ENCODE measurements at regions of chr6 and their contacts with region 1.

Region 1: DNA sequence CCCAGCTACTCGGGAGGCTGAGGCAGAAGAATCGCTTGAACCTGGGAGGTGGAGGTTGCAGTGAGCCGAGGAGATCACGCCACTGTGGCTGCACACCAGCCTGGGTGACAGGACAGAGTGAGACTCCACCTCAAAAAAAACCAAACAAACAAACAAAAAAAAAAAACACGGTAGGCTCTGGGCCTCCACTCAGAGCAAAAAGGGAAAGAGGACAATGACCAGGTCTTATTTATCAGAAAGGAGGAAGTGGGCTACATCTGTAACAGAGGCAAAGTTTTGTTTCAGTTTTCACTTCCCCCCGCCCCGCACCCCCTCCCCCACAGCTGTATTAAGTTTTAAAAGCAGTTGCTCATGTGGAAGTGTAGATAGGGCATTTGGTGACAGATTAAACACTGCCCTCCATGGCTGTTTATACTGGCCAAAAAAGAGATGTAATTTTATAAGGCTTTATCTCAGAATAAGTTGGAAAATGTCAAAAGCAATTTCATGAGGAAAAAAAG is 114.6 kb downstream of the RCAN2 start:
- DNase-seq: no peak
- ATAC-seq: peak in 2 of 4 donors; percentile 7 to 22
- H3K4me3 ChIP-seq: no peak overlapping the region
- H3K27ac ChIP-seq: peak overlapping the region in 1 of 12 donors; percentile 44
- H3K4me1 ChIP-seq: peaks cover 0 to 73% (median 45%) of the 10 kb centered on the region in 12 donors
- H3K27me3 ChIP-seq: no peaks in the 10 kb centered on the region
- CTCF ChIP-seq: no peak
- POLR2A ChIP-seq: no peak

Region 2: GRCh38 chr6:46221222-46221793 is 155.3 kb before region 1 on chr6:
- intact Hi-C with region 1: no loop called
- DNase-seq: no peak
- ATAC-seq: peak in 3 of 4 donors; percentile 35 to 67 (median 55)
- H3K4me3 ChIP-seq: no peak overlapping the region
- H3K27ac ChIP-seq: no peak overlapping the region
- H3K4me1 ChIP-seq: peaks cover 0 to 35% (median 7%) of the 10 kb centered on the region in 12 donors
- H3K27me3 ChIP-seq: no peaks in the 10 kb centered on the region
- CTCF ChIP-seq: peak; percentile 72 to 90 (median 84)
- POLR2A ChIP-seq: no peak

Region 3: DNA sequence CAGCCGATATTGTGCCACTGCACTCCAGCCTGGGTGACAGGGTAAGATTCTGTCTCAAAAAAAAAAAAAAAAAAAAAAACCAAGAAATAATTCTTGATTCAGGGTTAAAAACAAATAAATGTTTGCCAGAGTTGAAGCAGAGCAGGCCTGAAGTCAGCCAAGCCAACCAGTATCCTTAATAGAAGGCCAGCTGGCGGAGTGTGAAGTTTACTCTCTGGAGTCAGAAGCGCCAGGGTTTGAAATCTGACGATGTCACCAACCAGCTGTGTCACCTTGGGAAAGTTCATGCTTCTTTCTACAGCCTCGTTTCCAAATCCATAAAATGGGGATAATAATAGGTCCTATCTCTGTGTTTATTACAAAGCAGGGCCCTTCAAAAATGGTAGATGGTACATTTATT is 132.9 kb before region 1 on chr6:
- intact Hi-C with region 1: loop called in 1 of 10 experiments (anchors 10 kb)
- DNase-seq: peak in 2 of 5 donors; percentile 35 to 39
- ATAC-seq: peak; percentile 51 to 72 (median 62)
- H3K4me3 ChIP-seq: no peak overlapping the region
- H3K27ac ChIP-seq: peak overlapping the region in 7 of 12 donors; percentile 24 to 69 (median 53)
- H3K4me1 ChIP-seq: peaks cover 2 to 70% (median 25%) of the 10 kb centered on the region in 12 donors
- H3K27me3 ChIP-seq: no peaks in the 10 kb centered on the region
- CTCF ChIP-seq: no peak
- POLR2A ChIP-seq: no peak

Region 4: GRCh38 chr6:46312654-46313053 is 64.0 kb before region 1 on chr6:
- intact Hi-C with region 1: loop called in 1 of 10 experiments (anchors 5 kb)
- DNase-seq: peak in 1 of 5 donors; percentile 31
- ATAC-seq: peak in 3 of 4 donors; percentile 52 to 66 (median 54)
- H3K4me3 ChIP-seq: no peak overlapping the region
- H3K27ac ChIP-seq: no peak overlapping the region
- H3K4me1 ChIP-seq: peaks cover 0 to 25% (median 8%) of the 10 kb centered on the region in 12 donors
- H3K27me3 ChIP-seq: no peaks in the 10 kb centered on the region
- CTCF ChIP-seq: no peak
- POLR2A ChIP-seq: no peak